AG04450 (cell line): ENCODE measurements at regions of chr1 and their contacts with region 1.

Region 1: DNA sequence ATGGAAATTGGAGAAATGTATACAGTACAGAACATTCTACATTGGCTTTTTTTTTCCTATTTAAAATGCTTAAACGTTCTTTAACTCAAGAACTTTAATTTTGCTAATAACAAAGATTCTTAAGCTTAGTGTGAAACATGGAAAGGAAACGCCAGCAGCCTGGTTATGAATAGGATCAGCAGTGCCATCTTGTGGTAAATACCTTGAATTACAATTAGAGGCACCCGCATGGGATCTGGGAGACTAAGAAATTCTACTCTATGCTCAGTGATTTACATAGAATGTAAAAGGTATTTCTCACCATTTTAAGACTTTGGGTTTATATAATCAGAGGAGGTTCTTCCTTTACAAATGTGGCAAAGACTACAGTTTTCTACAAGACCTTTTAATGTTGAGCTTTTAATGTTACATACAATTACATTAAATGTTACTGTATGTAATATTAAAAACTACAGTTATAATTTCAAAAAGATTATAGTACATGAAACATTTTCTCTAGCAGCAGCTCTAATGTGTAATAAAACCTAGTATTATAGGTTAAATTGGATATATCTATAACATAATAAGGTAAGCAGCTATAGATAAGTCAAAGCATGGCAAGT is 32.1 kb upstream of the APOBEC4 start:
- DNase-seq: no peak
- H3K4me3 ChIP-seq: no peak overlapping the region
- H3K27ac ChIP-seq: no peak overlapping the region
- H3K27me3 ChIP-seq: no peaks in the 10 kb centered on the region
- CTCF ChIP-seq: peak; percentile 71

Region 2: DNA sequence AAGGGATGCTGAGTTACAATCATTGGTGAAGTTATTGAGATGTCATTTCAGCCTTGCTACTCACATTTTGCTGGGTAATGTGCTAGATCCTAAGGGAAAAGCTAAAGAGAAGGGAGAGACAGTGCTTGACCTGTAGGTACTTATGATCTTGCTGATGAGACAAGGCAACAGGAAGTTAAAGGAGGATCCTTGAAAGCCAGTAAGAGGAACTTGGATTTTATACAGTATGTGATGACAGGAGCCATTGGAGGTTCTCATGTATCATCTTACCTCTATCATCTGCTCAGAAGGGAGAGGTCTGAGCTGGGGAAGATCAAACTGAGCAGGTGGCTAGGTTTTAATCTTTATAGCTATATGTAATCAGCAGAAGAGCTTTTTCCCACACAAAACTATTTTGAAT is 38.4 kb before region 1 on chr1:
- CTCF ChIA-PET with region 1: interaction called, 126 read pairs
- POLR2A ChIA-PET with region 1: no interaction called
- DNase-seq: no peak
- H3K4me3 ChIP-seq: no peak overlapping the region
- H3K27ac ChIP-seq: no peak overlapping the region
- H3K27me3 ChIP-seq: no peaks in the 10 kb centered on the region
- CTCF ChIP-seq: no peak

Region 3: GRCh38 chr1:183670178-183670577 is 15.0 kb before region 1 on chr1:
- CTCF ChIA-PET with region 1: interaction called, 38 read pairs
- POLR2A ChIA-PET with region 1: no interaction called
- DNase-seq: no peak
- H3K4me3 ChIP-seq: no peak overlapping the region
- H3K27ac ChIP-seq: no peak overlapping the region
- H3K27me3 ChIP-seq: no peaks in the 10 kb centered on the region
- CTCF ChIP-seq: peak; percentile 31; the same call in 1 of the 2 replicates

Region 4: DNA sequence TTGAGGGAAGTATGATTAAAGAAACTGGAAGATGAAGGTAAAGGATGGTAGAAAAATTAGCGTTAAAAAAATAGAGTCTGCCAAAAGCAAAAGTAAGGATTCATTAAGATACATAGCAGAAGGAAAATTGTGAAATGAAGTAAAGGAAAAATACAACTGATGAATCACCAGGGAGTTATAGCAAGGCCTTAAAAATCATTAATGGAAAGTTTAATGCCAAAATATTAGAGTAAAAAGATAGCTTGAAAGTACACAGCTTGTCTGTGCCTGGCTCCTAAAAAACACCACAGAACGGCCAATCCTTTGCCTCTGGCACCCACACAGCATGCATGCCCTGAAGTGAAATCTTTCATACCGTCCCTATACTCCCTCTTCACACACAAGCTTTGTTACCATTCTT is 34.8 kb after region 1 on chr1:
- CTCF ChIA-PET with region 1: interaction called, 18 read pairs
- POLR2A ChIA-PET with region 1: no interaction called
- DNase-seq: no peak
- H3K4me3 ChIP-seq: no peak overlapping the region
- H3K27ac ChIP-seq: no peak overlapping the region
- H3K27me3 ChIP-seq: no peaks in the 10 kb centered on the region
- CTCF ChIP-seq: no peak

Region 5: DNA sequence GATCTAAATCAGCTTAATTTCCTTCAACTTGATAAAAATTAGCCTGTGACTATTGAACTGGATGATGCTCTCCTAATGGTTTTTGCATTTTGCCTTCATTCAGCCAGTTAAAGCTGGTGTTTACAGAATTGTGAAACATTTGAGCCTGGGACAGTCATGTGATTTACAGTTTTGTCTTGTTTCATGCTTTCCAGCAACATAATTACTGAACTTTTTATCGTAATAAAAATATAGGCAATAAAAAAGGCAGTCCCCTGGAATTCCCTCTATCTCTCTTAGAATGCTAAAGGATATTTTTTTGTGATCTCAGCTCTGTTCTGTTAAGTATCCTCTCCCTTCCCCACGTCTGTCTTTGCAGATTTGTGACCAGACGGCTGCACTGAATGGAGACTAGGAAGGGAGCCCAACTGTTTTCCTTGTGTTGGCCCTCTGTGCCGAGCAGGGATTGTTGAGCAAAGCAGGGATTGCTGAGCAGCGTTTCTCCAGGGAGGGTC is 49.4 kb after region 1 on chr1:
- CTCF ChIA-PET with region 1: interaction called, 15 read pairs
- POLR2A ChIA-PET with region 1: no interaction called
- DNase-seq: no peak
- H3K4me3 ChIP-seq: no peak overlapping the region
- H3K27ac ChIP-seq: peak overlapping the region; percentile 41
- H3K27me3 ChIP-seq: no peaks in the 10 kb centered on the region
- CTCF ChIP-seq: no peak